ENCODE measurements at regions of chr9 and their contacts with region 1.

Region 1: GRCh38 chr9:90914868-90915483 is 113.4 kb downstream of the SYK start:
- DNase-seq: peak; percentile 58 to 87 (median 64)
- ATAC-seq: peak; percentile 95
- H3K4me3 ChIP-seq: no peak overlapping the region
- H3K4me3 Mint-ChIP-seq: no peak overlapping the region
- H3K27ac ChIP-seq: no peak overlapping the region
- H3K27ac Mint-ChIP-seq: no peak overlapping the region
- H3K4me1 ChIP-seq: no peaks in the 10 kb centered on the region
- H3K4me1 Mint-ChIP-seq: no peaks in the 10 kb centered on the region
- H3K27me3 ChIP-seq: no peaks in the 10 kb centered on the region
- H3K27me3 Mint-ChIP-seq: no peaks in the 10 kb centered on the region
- CTCF ChIP-seq: peak; percentile 93

Region 2: GRCh38 chr9:90881648-90882047 is 33.3 kb before region 1 on chr9:
- CTCF ChIA-PET with region 1: no interaction called
- POLR2A ChIA-PET with region 1: no interaction called
- intact Hi-C with region 1: no loop called
- DNase-seq: no peak
- ATAC-seq: no peak
- H3K4me3 ChIP-seq: no peak overlapping the region
- H3K4me3 Mint-ChIP-seq: no peak overlapping the region
- H3K27ac ChIP-seq: no peak overlapping the region
- H3K27ac Mint-ChIP-seq: no peak overlapping the region
- H3K4me1 ChIP-seq: no peaks in the 10 kb centered on the region
- H3K4me1 Mint-ChIP-seq: no peaks in the 10 kb centered on the region
- H3K27me3 ChIP-seq: no peaks in the 10 kb centered on the region
- H3K27me3 Mint-ChIP-seq: peaks cover 5% of the 10 kb centered on the region
- CTCF ChIP-seq: no peak

Region 3: DNA sequence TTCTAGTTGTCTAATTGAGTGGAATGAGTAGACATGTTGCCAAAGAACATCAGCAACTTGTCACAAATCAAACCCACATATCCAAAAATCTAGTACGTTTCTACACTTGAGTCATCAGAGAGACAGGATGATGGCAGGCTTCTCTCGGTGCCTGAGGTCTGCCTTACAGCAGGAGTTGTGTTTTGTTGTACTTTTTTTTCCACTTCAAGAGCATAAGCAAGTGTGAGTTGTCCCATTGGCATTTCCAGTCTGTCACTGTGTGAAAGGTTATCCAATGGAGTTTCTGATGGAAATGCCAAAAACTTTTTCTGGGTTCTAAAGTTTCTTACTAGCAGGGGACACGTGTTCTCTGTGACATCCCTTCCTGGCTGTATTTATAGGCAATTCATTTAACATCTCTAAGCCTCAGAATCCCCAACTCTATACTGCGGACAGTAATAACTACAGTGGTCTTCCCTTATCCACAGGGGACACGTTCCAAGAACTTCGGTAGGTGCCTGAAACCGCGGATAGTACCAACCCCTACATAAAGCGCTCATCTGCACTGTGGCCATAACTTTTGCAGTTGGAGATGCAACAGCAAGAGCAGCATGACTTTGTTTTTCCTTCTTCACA is 133.1 kb after region 1 on chr9:
- CTCF ChIA-PET with region 1: no interaction called
- POLR2A ChIA-PET with region 1: no interaction called
- intact Hi-C with region 1: no loop called
- DNase-seq: no peak
- ATAC-seq: peak; percentile 59
- H3K4me3 ChIP-seq: no peak overlapping the region
- H3K4me3 Mint-ChIP-seq: peak overlapping the region; percentile 40
- H3K27ac ChIP-seq: no peak overlapping the region
- H3K27ac Mint-ChIP-seq: no peak overlapping the region
- H3K4me1 ChIP-seq: peaks cover 14% of the 10 kb centered on the region
- H3K4me1 Mint-ChIP-seq: peaks cover 19% of the 10 kb centered on the region
- H3K27me3 ChIP-seq: peaks cover 23 to 26% of the 10 kb centered on the region in 2 experiments
- H3K27me3 Mint-ChIP-seq: peaks cover 42% of the 10 kb centered on the region
- CTCF ChIP-seq: no peak

Region 4: GRCh38 chr9:91253488-91253887 is 338.5 kb after region 1 on chr9:
- CTCF ChIA-PET with region 1: no interaction called
- POLR2A ChIA-PET with region 1: no interaction called
- intact Hi-C with region 1: loop called in 1 of 2 experiments (anchors 10 kb)
- DNase-seq: peak in 4 of 14 experiments; percentile 10 to 65 (median 48)
- ATAC-seq: peak; percentile 57
- H3K4me3 ChIP-seq: no peak overlapping the region
- H3K4me3 Mint-ChIP-seq: no peak overlapping the region
- H3K27ac ChIP-seq: no peak overlapping the region
- H3K27ac Mint-ChIP-seq: no peak overlapping the region
- H3K4me1 ChIP-seq: peaks cover 6% of the 10 kb centered on the region
- H3K4me1 Mint-ChIP-seq: no peaks in the 10 kb centered on the region
- H3K27me3 ChIP-seq: no peaks in the 10 kb centered on the region
- H3K27me3 Mint-ChIP-seq: no peaks in the 10 kb centered on the region
- CTCF ChIP-seq: no peak

Region 5: DNA sequence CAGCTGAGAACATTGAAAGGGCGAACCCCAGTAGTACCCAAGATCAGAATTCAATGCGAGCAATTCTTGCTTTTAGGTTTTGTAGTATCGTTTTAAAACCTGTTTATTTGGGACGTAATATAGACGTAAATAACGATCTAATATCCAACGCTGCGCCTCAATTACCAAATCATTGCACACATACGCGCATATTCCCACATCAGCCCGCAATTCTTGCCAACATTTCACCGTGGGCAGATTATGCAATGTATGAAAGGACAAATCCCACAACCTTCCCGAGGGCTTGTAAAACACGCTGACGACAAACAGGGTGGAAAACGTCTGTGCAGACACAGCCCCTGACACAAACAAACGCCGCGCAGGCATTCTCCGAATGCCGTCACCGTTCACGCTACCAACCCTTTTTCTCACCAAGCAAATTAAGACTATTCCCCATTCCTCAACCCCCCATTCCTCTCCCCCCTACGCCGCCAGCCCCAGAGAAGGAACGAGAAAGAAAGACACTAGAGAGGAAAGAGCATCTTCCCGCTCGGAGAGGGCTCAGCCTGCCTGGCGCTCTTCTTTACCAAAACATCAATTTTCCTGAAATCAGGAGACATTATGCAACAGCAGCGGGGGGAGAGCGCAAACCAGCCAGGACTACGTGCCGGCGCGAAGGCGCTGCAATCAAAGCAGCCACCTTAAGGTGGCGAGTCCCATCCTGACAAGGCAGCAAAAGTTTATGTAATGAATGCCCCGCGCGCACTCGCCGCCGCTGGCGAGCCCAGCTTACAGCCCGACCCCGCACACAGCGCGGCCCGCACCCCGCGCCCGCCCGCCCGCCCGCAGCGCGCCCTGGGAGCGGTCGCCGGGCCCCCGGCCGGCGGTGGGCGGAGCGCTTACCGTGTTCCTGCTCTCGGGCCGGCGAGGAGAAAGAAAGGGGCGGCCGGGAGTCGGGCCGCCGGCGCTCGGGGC is 508.1 kb after region 1 on chr9:
- CTCF ChIA-PET with region 1: interaction called, 19 read pairs
- POLR2A ChIA-PET with region 1: interaction called, 11 read pairs
- intact Hi-C with region 1: loop called (anchors 1 kb)
- DNase-seq: peak; percentile 22 to 85 (median 49)
- ATAC-seq: peak; percentile 50
- H3K4me3 ChIP-seq: peak overlapping the region; percentile 73
- H3K4me3 Mint-ChIP-seq: peak overlapping the region; percentile 96
- H3K27ac ChIP-seq: no peak overlapping the region
- H3K27ac Mint-ChIP-seq: peak overlapping the region; percentile 82
- H3K4me1 ChIP-seq: peaks cover 45% of the 10 kb centered on the region
- H3K4me1 Mint-ChIP-seq: peaks cover 45% of the 10 kb centered on the region
- H3K27me3 ChIP-seq: peaks cover 22 to 42% of the 10 kb centered on the region in 2 experiments
- H3K27me3 Mint-ChIP-seq: peaks cover 52% of the 10 kb centered on the region
- CTCF ChIP-seq: peak; percentile 16

Region 6: GRCh38 chr9:91681461-91682305 is 766.7 kb after region 1 on chr9:
- CTCF ChIA-PET with region 1: no interaction called
- POLR2A ChIA-PET with region 1: no interaction called
- intact Hi-C with region 1: loop called (anchors 1 to 5 kb)
- DNase-seq: peak; percentile 11 to 68 (median 40)
- ATAC-seq: peak; percentile 57
- H3K4me3 ChIP-seq: no peak overlapping the region
- H3K4me3 Mint-ChIP-seq: no peak overlapping the region
- H3K27ac ChIP-seq: no peak overlapping the region
- H3K27ac Mint-ChIP-seq: no peak overlapping the region
- H3K4me1 ChIP-seq: peaks cover 7% of the 10 kb centered on the region
- H3K4me1 Mint-ChIP-seq: peaks cover 4% of the 10 kb centered on the region
- H3K27me3 ChIP-seq: peaks cover 12 to 28% of the 10 kb centered on the region in 2 experiments
- H3K27me3 Mint-ChIP-seq: peaks cover 58% of the 10 kb centered on the region
- CTCF ChIP-seq: peak; percentile 67

Region 7: GRCh38 chr9:91727316-91727861 is 812.4 kb after region 1 on chr9:
- CTCF ChIA-PET with region 1: interaction called, 5 read pairs
- POLR2A ChIA-PET with region 1: no interaction called
- intact Hi-C with region 1: loop called (anchors 1 kb)
- DNase-seq: peak in 4 of 14 experiments; percentile 21 to 58 (median 40)
- ATAC-seq: no peak
- H3K4me3 ChIP-seq: no peak overlapping the region
- H3K4me3 Mint-ChIP-seq: no peak overlapping the region
- H3K27ac ChIP-seq: no peak overlapping the region
- H3K27ac Mint-ChIP-seq: no peak overlapping the region
- H3K4me1 ChIP-seq: no peaks in the 10 kb centered on the region
- H3K4me1 Mint-ChIP-seq: no peaks in the 10 kb centered on the region
- H3K27me3 ChIP-seq: no peaks in the 10 kb centered on the region
- H3K27me3 Mint-ChIP-seq: peaks cover 8% of the 10 kb centered on the region
- CTCF ChIP-seq: peak; percentile 66

Region 8: GRCh38 chr9:91734371-91734981 is 819.5 kb after region 1 on chr9:
- CTCF ChIA-PET with region 1: interaction called, 5 read pairs
- POLR2A ChIA-PET with region 1: no interaction called
- intact Hi-C with region 1: loop called (anchors 1 to 2 kb)
- DNase-seq: peak; percentile 22 to 67 (median 46)
- ATAC-seq: peak; percentile 34
- H3K4me3 ChIP-seq: no peak overlapping the region
- H3K4me3 Mint-ChIP-seq: no peak overlapping the region
- H3K27ac ChIP-seq: no peak overlapping the region
- H3K27ac Mint-ChIP-seq: no peak overlapping the region
- H3K4me1 ChIP-seq: no peaks in the 10 kb centered on the region
- H3K4me1 Mint-ChIP-seq: no peaks in the 10 kb centered on the region
- H3K27me3 ChIP-seq: peaks cover 0 to 8% of the 10 kb centered on the region in 2 experiments
- H3K27me3 Mint-ChIP-seq: peaks cover 18% of the 10 kb centered on the region
- CTCF ChIP-seq: peak; percentile 96